Naive thymus-derived CD4-positive, alpha-beta T cell (primary cell): ENCODE measurements at regions of chr7 and their contacts with region 1.

Region 1: DNA sequence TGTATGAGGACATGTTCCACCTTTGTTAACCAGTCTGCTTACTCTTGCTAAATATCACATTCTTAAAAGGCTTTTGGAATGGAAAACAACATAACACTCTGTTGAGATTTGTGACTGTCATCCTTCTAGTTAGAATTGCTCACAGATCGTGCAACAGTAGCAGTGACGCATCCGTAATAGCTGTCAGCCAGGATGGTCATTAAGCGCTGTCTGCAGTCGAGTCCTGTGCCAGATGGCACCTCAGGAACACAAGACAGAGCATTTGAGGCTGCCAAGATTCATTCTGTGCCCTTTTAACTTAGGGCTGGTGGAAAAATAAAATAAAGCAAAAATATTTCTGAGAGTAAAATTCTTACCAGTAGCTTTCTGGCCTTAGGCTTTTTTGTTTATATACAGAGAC is 348.6 kb downstream of the ANKRD7 start:
- DNase-seq: no peak
- ATAC-seq: no peak
- H3K4me3 ChIP-seq: no peak overlapping the region
- H3K4me3 Mint-ChIP-seq: no peak overlapping the region
- H3K27ac ChIP-seq: no peak overlapping the region
- H3K27ac Mint-ChIP-seq: no peak overlapping the region
- H3K4me1 ChIP-seq: no peaks in the 10 kb centered on the region
- H3K4me1 Mint-ChIP-seq: peaks cover 0 to 1% (median 0%) of the 10 kb centered on the region in 7 donors
- H3K27me3 ChIP-seq: no peaks in the 10 kb centered on the region
- H3K27me3 Mint-ChIP-seq: no peaks in the 10 kb centered on the region

Region 2: GRCh38 chr7:118689403-118689802 is 116.3 kb after region 1 on chr7:
- CTCF ChIA-PET with region 1: no interaction called
- POLR2A ChIA-PET with region 1: no interaction called
- intact Hi-C with region 1: no loop called
- DNase-seq: no peak
- ATAC-seq: no peak
- H3K4me3 ChIP-seq: no peak overlapping the region
- H3K4me3 Mint-ChIP-seq: no peak overlapping the region
- H3K27ac ChIP-seq: no peak overlapping the region
- H3K27ac Mint-ChIP-seq: no peak overlapping the region
- H3K4me1 ChIP-seq: no peaks in the 10 kb centered on the region
- H3K4me1 Mint-ChIP-seq: no peaks in the 10 kb centered on the region
- H3K27me3 ChIP-seq: no peaks in the 10 kb centered on the region
- H3K27me3 Mint-ChIP-seq: no peaks in the 10 kb centered on the region

Region 3: GRCh38 chr7:118753479-118753878 is 180.4 kb after region 1 on chr7:
- CTCF ChIA-PET with region 1: no interaction called
- POLR2A ChIA-PET with region 1: no interaction called
- intact Hi-C with region 1: loop called in 1 of 2 experiments (anchors 1 kb)
- DNase-seq: no peak
- ATAC-seq: no peak
- H3K4me3 ChIP-seq: no peak overlapping the region
- H3K4me3 Mint-ChIP-seq: no peak overlapping the region
- H3K27ac ChIP-seq: no peak overlapping the region
- H3K27ac Mint-ChIP-seq: no peak overlapping the region
- H3K4me1 ChIP-seq: no peaks in the 10 kb centered on the region
- H3K4me1 Mint-ChIP-seq: no peaks in the 10 kb centered on the region
- H3K27me3 ChIP-seq: no peaks in the 10 kb centered on the region
- H3K27me3 Mint-ChIP-seq: no peaks in the 10 kb centered on the region